Common myeloid progenitor, CD34-positive (primary cell): ENCODE measurements at regions of chr11 and their contacts with region 1.

Region 1: DNA sequence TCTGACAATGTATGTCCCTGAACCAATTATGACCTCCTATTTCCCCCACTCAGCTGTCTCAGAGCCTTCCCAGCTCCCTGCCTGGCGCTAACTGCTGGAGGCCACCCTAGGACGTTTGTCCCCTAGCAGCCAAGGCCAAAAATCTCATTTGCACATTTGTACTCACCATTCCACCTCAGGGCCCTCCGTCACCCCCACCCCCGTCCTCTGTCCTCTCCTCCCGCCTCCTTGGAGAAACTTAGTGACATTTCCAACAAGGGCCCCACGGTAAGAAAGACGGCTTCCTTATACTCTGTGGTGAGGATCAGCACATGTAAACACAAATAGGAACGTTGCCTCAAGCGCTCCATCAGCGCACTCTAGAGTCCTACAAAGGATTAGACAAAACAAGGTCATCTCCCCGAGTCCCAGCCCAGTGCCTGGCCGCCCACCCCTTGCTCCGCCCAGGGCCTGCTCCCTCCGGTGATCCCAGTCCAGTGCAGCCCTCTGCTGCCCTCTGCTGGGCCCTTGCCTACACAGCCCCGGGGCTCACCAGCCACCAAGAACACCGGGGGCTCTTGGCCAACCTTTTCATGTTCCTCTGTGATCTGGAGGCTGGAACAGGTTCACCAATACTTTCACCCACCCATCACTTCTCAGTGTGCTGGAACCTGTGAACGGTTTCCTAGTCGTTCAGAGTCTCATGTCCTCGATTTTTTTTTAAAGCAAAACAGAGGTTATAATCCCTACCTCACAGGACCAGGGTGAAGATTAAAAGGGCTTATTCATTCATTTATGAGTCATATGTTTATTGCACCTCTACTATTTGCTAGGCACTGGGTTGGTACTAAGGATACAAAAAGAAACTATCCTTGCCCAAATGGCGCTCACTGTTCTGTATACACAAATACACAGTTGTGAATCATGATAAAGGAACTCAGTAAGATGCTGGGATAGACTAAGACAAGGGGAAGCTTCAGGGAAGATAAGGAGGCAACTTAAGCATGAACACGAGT is 15.3 kb upstream of the CTR9 start:
- DNase-seq: peak; percentile 94 to 96 (median 96)
- H3K4me3 ChIP-seq: peak overlapping the region in 5 of 7 experiments; percentile 19 to 58 (median 25)
- H3K27ac ChIP-seq: peak overlapping the region in 1 of 2 experiments; percentile 34
- H3K4me1 ChIP-seq: peaks cover 2 to 32% (median 11%) of the 10 kb centered on the region in 4 experiments
- H3K27me3 ChIP-seq: no peaks in the 10 kb centered on the region

Region 2: GRCh38 chr11:10400856-10401255 is 334.9 kb before region 1 on chr11:
- CTCF ChIA-PET with region 1: interaction called, 23 read pairs
- POLR2A ChIA-PET with region 1: no interaction called
- DNase-seq: peak in 2 of 3 donors; percentile 54 to 60
- H3K4me3 ChIP-seq: no peak overlapping the region
- H3K27ac ChIP-seq: no peak overlapping the region
- H3K4me1 ChIP-seq: peaks cover 4 to 34% (median 29%) of the 10 kb centered on the region in 4 experiments
- H3K27me3 ChIP-seq: no peaks in the 10 kb centered on the region

Region 3: DNA sequence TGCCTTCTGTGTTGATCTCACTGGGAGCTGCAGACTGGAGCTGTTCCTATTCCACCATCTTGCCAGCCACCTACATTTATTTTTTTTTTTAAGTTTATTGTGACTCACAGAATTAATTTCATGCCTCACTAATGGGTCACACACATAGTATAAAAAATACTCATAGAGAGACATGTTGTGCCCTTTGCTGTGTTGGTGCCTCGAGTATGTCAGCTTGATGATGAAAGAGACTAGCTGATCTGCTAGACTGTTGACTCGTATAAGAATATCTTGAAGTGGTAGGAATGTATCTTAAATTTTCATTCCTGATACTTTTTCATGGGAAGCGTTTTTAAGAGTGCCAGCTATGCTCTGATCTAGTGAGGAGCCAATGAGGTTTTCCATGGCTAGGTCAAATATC is 309.3 kb before region 1 on chr11:
- CTCF ChIA-PET with region 1: no interaction called
- POLR2A ChIA-PET with region 1: no interaction called
- DNase-seq: no peak
- H3K4me3 ChIP-seq: no peak overlapping the region
- H3K27ac ChIP-seq: no peak overlapping the region
- H3K4me1 ChIP-seq: no peaks in the 10 kb centered on the region
- H3K27me3 ChIP-seq: no peaks in the 10 kb centered on the region

Region 4: DNA sequence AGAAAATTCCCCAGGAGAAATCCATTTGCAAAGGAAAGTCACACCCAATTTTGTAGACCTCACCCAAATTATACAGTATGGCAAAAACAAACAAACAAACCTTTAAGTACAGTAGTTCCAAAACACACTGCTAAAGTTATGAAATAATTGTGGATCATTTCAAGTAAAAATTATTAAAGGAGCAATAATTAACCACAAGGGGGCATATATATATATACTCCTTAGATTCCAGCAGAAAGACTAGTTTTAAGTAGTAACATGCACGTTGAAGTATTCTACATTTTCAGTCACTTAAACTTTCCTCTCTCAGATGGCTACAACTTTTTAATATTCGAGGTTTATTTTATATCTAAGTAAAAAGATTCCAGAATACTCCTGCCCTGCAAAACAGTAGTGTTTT is 221.6 kb before region 1 on chr11:
- CTCF ChIA-PET with region 1: interaction called, 12 read pairs
- POLR2A ChIA-PET with region 1: no interaction called
- DNase-seq: peak in 2 of 3 donors; percentile 51 to 53
- H3K4me3 ChIP-seq: no peak overlapping the region
- H3K27ac ChIP-seq: no peak overlapping the region
- H3K4me1 ChIP-seq: no peaks in the 10 kb centered on the region
- H3K27me3 ChIP-seq: no peaks in the 10 kb centered on the region

Region 5: GRCh38 chr11:10534316-10534715 is 201.5 kb before region 1 on chr11:
- CTCF ChIA-PET with region 1: interaction called, 14 read pairs
- POLR2A ChIA-PET with region 1: no interaction called
- DNase-seq: peak in 2 of 3 donors; percentile 78 to 87
- H3K4me3 ChIP-seq: no peak overlapping the region
- H3K27ac ChIP-seq: no peak overlapping the region
- H3K4me1 ChIP-seq: peaks cover 6 to 26% (median 14%) of the 10 kb centered on the region in 4 experiments
- H3K27me3 ChIP-seq: no peaks in the 10 kb centered on the region

Region 6: GRCh38 chr11:10592331-10592730 is 143.4 kb before region 1 on chr11:
- CTCF ChIA-PET with region 1: no interaction called
- POLR2A ChIA-PET with region 1: no interaction called
- DNase-seq: peak in 2 of 3 donors; percentile 43 to 54
- H3K4me3 ChIP-seq: no peak overlapping the region
- H3K27ac ChIP-seq: no peak overlapping the region
- H3K4me1 ChIP-seq: peaks cover 0 to 29% (median 11%) of the 10 kb centered on the region in 4 experiments
- H3K27me3 ChIP-seq: no peaks in the 10 kb centered on the region

Region 7: DNA sequence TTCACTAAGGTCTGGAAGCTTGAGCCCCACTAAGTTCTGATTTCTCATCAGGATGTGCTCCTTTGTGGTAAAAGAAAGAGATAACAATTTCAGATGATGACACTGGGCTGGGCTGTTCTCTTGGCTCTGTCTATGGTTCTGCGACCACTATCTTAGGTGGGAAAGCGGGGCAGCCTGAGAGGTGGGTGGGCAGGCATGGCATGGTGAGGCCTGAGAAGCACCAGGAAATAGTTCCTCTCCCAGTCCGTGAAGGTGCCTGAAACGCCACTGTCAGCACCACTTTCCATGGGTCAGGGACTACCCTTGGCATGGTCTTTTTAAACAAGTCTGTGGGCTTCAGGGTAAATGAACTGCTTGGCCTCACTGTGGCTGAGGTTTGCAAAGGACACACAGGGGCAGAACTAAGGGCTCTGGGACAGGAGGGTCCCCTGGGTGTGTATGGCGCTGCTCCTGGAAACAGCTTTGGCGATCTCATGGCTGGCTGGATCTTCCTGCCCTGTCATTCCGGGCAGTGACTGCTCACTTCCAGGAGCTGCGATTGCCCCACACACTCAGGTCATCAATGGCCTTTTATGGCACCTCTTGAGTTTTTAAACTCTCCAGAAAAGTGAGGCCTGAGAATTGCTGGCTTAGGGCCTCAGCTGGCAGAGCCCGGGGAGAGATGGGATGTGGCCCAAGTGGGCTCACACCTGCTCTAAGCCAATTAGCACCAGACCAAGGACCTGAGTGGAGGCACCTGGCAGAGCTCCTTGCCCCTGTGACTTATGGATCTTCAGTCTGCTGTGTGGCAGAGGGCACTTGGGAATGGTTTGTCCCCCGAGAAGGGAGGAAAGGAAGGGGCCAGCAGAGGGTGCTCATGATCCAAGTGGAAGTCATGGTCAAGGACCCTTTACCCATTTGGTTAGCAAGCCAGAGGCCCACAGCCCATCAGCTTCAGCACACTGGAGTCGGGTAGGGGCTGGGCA is 111.7 kb before region 1 on chr11:
- CTCF ChIA-PET with region 1: interaction called, 12 read pairs
- POLR2A ChIA-PET with region 1: no interaction called
- DNase-seq: no peak
- H3K4me3 ChIP-seq: no peak overlapping the region
- H3K27ac ChIP-seq: no peak overlapping the region
- H3K4me1 ChIP-seq: peaks cover 0 to 35% (median 31%) of the 10 kb centered on the region in 4 experiments
- H3K27me3 ChIP-seq: no peaks in the 10 kb centered on the region

Region 8: DNA sequence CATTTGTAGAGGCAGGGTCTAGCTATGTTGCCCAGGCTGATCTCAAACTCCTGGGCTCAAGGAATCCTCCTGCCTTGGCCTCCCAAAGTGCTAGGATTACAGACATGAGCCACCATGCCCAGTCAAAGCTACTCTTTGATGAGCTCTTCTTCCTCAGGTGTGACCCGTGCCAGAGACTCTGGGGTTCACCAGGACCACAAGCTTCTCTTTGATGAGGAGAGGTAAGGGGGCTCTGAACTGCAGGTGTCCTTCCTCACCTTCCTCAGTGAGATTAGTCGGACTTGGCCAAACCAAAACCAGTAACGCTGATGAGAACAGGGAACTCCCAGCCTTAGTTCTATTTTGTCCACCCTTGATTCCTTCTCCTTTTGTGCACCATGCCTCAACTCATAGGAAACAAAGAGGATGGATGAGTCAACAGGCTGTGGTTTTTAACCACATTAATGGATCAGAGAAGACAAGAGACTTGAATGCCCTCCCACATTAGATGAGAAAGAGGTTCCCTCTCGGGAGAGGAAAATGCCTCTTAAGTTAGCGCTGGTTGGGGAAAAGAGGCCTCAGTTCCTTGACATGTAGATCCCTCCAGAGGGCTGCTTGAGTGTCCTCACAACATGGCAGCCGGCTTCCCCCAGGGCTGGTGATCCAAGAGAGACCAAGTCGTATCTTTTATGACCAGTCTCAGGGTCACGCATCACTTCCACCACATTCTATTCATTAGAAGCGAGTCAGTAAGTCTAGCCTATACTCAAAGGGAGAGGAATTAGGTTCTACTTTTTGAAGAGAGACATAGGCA is 10.5 kb before region 1 on chr11:
- CTCF ChIA-PET with region 1: interaction called, 11 read pairs
- POLR2A ChIA-PET with region 1: interaction called, 3 read pairs
- DNase-seq: peak in 2 of 3 donors; percentile 88 to 89
- H3K4me3 ChIP-seq: no peak overlapping the region
- H3K27ac ChIP-seq: no peak overlapping the region
- H3K4me1 ChIP-seq: peaks cover 2 to 39% (median 34%) of the 10 kb centered on the region in 4 experiments
- H3K27me3 ChIP-seq: no peaks in the 10 kb centered on the region

Region 9: DNA sequence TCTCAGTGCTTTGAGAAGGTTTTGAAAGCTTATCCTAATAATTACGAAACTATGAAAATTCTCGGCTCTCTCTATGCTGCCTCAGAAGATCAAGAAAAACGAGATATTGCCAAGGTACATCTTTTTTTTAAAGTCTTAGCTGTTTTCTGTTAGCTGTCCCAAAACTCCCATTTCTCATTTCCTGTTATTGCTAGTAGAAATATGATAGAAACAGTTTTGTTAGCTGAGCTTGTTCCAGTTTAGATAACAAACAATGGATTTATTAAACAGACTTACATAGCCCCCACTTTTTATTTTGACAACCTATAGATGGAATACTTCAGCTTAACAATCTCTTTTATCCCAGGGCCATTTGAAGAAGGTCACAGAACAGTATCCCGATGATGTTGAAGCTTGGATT is 28.0 kb after region 1 on chr11:
- CTCF ChIA-PET with region 1: no interaction called
- POLR2A ChIA-PET with region 1: no interaction called
- DNase-seq: no peak
- H3K4me3 ChIP-seq: no peak overlapping the region
- H3K27ac ChIP-seq: no peak overlapping the region
- H3K4me1 ChIP-seq: peaks cover 0 to 14% (median 5%) of the 10 kb centered on the region in 4 experiments
- H3K27me3 ChIP-seq: no peaks in the 10 kb centered on the region